Activated naive CD4-positive, alpha-beta T cell treated with anti-CD3 and anti-CD28 coated beads for 36 hours (primary cell): ENCODE measurements at regions of chr6 and their contacts with region 1.

Region 1: DNA sequence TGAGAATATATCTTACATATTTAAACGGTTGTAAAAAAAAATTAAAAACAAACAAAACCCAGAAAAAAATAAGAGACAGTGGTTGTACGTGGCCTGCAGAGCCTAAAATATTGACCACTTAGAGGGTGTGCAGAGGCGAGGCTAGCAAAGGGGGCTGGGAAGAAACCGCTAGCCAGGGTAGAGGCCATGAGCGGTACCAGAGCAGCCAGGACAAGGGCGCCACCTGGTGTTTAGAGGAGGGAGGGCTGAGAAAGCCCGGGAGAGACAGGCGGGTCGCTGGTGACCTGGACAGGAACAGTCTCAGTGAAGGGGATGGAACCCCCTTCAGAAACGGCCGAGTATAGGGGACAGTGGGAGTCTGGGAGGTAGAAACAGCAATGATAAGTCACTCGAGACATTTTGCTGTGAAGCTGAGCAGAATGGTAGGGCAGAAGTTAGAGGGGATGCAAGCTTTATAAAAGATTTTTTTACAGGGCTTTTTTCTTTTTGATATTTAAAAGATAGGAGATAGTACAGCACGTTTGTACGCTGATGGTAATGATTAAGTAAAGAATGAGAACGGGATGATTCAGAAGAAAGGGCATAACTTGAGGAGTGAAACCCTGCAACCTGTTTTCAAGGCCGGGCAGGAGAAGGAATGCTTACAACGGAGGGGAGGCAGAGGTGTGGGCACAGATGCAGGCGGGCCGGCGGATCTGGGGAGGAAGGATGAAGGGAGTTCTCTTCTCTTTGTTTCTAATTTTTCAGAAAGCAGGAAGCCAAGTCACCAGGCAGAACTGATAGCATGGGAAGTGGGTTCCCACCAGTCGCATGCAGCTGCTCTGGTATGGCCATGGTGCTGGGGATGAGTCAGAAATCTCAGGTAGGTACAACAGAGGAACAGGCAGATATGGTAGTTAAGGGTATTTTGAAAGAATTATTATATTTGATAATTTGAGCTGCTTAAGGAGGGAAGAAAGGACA is 76.2 kb downstream of the FAM229B start:
- DNase-seq: peak; percentile 91
- H3K4me3 Mint-ChIP-seq: peak overlapping the region; percentile 61
- H3K27ac Mint-ChIP-seq: peak overlapping the region; percentile 37
- H3K4me1 Mint-ChIP-seq: peaks cover 12% of the 10 kb centered on the region
- H3K27me3 Mint-ChIP-seq: peaks cover 6% of the 10 kb centered on the region

Region 2: DNA sequence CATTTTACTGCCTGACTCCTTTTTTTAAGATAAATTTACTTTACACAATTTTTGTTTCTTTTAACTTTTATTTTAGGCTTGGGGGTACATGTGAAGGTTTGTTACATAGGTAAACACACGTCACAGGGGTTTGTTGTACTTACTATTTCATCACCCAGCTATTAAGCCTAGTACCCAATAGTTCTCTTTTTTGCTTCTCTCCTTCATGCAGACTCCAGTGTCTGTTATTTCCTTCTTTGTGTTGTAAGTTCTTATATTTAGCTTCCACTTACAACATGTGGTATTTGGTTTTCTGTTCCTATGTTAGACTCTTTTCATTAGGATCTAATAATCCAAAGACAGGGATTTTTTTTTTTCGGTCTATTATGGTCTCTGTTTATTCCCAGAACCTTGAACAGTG is 193.2 kb before region 1 on chr6:
- CTCF ChIA-PET with region 1: no interaction called
- intact Hi-C with region 1: no loop called
- DNase-seq: no peak
- H3K4me3 Mint-ChIP-seq: no peak overlapping the region
- H3K27ac Mint-ChIP-seq: no peak overlapping the region
- H3K4me1 Mint-ChIP-seq: peaks cover 48% of the 10 kb centered on the region
- H3K27me3 Mint-ChIP-seq: no peaks in the 10 kb centered on the region

Region 3: GRCh38 chr6:112010328-112010727 is 153.2 kb before region 1 on chr6:
- CTCF ChIA-PET with region 1: interaction called, 8 read pairs
- intact Hi-C with region 1: loop called (anchors 1 kb)
- DNase-seq: peak; percentile 65
- H3K4me3 Mint-ChIP-seq: no peak overlapping the region
- H3K27ac Mint-ChIP-seq: no peak overlapping the region
- H3K4me1 Mint-ChIP-seq: peaks cover 40% of the 10 kb centered on the region
- H3K27me3 Mint-ChIP-seq: no peaks in the 10 kb centered on the region

Region 4: GRCh38 chr6:112076200-112076599 is 87.4 kb before region 1 on chr6:
- CTCF ChIA-PET with region 1: interaction called, 11 read pairs
- intact Hi-C with region 1: no loop called
- DNase-seq: no peak
- H3K4me3 Mint-ChIP-seq: no peak overlapping the region
- H3K27ac Mint-ChIP-seq: no peak overlapping the region
- H3K4me1 Mint-ChIP-seq: no peaks in the 10 kb centered on the region
- H3K27me3 Mint-ChIP-seq: no peaks in the 10 kb centered on the region

Region 5: DNA sequence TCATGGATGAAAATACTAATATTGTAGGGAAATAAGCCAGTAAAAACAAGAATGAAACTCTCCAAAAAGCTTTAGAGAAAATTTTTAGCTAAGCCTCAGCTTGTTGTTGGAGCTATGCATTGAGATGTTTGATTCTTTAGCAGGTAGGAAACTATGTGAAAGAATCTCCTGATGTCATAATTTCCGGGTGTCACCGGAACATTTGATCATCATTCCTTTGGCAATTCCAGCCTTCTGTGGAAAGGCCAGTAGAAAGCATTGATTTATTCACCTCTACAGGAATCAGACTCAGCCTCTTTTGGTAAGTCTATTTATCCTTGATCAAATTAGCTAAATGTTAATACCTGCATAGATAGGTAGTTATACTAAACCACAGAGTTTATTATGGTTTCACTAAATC is 66.7 kb before region 1 on chr6:
- CTCF ChIA-PET with region 1: interaction called, 13 read pairs
- intact Hi-C with region 1: no loop called
- DNase-seq: no peak
- H3K4me3 Mint-ChIP-seq: no peak overlapping the region
- H3K27ac Mint-ChIP-seq: no peak overlapping the region
- H3K4me1 Mint-ChIP-seq: no peaks in the 10 kb centered on the region
- H3K27me3 Mint-ChIP-seq: no peaks in the 10 kb centered on the region

Region 6: GRCh38 chr6:112144145-112144926 is 19.2 kb before region 1 on chr6:
- CTCF ChIA-PET with region 1: interaction called, 22 read pairs
- intact Hi-C with region 1: no loop called
- DNase-seq: no peak
- H3K4me3 Mint-ChIP-seq: no peak overlapping the region
- H3K27ac Mint-ChIP-seq: no peak overlapping the region
- H3K4me1 Mint-ChIP-seq: no peaks in the 10 kb centered on the region
- H3K27me3 Mint-ChIP-seq: no peaks in the 10 kb centered on the region